ENCODE measurements at regions of chr11 and their contacts with region 1.

Region 1: DNA sequence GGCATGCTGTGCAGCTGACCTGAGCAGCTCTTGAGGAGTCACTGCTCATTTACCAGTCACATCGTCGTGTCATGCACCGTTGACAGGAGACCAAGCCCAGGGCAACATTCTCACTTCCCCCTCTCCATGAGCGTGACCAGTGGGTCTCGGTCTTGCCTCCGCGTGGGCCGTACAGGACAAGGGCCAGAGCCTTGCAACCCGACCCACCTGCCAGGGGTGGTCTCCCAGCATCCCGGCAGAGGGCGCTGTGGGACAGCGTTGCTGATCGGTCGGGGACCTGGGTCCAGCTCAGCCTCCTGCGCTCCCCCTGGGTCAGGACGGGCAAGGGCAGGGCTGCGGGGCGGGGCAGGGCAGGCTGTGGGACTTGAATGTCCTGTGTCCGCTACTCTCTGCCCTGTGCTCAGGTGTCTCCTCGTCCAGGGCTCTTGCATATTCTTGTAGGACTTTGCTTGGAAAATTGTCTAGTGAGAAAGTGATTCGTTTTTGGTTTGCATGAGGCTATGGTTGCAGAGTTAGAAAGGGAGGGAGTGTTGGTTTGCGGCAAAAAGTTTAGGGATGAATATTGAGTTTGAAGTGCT is 16.2 kb downstream of the EIF4G2 start:
- DNase-seq: peak; percentile 90
- H3K4me3 Mint-ChIP-seq: no peak overlapping the region
- H3K27ac Mint-ChIP-seq: no peak overlapping the region
- H3K4me1 Mint-ChIP-seq: peaks cover 21% of the 10 kb centered on the region
- H3K27me3 Mint-ChIP-seq: peaks cover 33% of the 10 kb centered on the region

Region 2: DNA sequence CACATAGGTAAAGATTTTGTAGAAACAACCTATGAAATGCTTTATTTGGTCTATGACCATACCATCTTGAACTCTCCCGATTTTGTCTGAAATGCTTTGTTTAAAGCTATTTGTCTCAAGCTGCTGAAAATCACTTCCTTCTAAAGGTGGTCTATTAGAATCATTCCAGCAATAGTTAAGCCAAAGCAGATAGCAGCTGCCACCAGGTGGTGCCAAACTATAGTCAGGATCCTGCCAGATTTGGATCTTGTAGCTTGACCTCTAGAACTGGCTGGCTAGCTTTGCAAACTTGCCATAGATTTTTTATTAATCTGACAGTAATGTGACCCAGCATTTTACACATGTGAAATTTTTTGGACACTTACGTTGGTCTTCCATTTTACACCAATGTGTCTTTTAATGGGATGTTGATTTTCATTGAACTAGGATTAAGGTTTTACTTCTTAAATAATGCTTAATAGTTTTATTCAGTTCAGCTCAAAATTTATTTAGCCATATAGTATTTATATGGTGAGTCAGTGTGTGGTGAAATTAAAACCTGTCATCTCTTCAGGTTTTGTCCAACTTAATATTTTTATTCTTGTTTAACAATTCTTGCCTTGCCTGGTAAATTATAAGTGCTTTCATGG is 21.7 kb before region 1 on chr11:
- CTCF ChIA-PET with region 1: interaction called, 13 read pairs
- DNase-seq: peak; percentile 47
- H3K4me3 Mint-ChIP-seq: no peak overlapping the region
- H3K27ac Mint-ChIP-seq: no peak overlapping the region
- H3K4me1 Mint-ChIP-seq: no peaks in the 10 kb centered on the region
- H3K27me3 Mint-ChIP-seq: no peaks in the 10 kb centered on the region

Region 3: GRCh38 chr11:10906513-10906912 is 114.0 kb after region 1 on chr11:
- CTCF ChIA-PET with region 1: interaction called, 16 read pairs
- DNase-seq: no peak
- H3K4me3 Mint-ChIP-seq: no peak overlapping the region
- H3K27ac Mint-ChIP-seq: no peak overlapping the region
- H3K4me1 Mint-ChIP-seq: no peaks in the 10 kb centered on the region
- H3K27me3 Mint-ChIP-seq: peaks cover 10% of the 10 kb centered on the region

Region 4: GRCh38 chr11:11016943-11017342 is 224.5 kb after region 1 on chr11:
- CTCF ChIA-PET with region 1: interaction called, 48 read pairs
- DNase-seq: no peak
- H3K4me3 Mint-ChIP-seq: no peak overlapping the region
- H3K27ac Mint-ChIP-seq: no peak overlapping the region
- H3K4me1 Mint-ChIP-seq: no peaks in the 10 kb centered on the region
- H3K27me3 Mint-ChIP-seq: no peaks in the 10 kb centered on the region

Region 5: GRCh38 chr11:11028017-11028692 is 235.7 kb after region 1 on chr11:
- CTCF ChIA-PET with region 1: interaction called, 36 read pairs
- DNase-seq: peak; percentile 85
- H3K4me3 Mint-ChIP-seq: no peak overlapping the region
- H3K27ac Mint-ChIP-seq: no peak overlapping the region
- H3K4me1 Mint-ChIP-seq: no peaks in the 10 kb centered on the region
- H3K27me3 Mint-ChIP-seq: peaks cover 19% of the 10 kb centered on the region

Measured in activated naive CD4-positive, alpha-beta T cell treated with anti-CD3 and anti-CD28 coated beads, Interleukin-2, amount 10 ng/mL, durations not matched to agents 7 days and 5 days (primary cell).